Mammary epithelial cell (primary cell): ENCODE measurements at regions of chr1 and their contacts with region 1.

Region 1: DNA sequence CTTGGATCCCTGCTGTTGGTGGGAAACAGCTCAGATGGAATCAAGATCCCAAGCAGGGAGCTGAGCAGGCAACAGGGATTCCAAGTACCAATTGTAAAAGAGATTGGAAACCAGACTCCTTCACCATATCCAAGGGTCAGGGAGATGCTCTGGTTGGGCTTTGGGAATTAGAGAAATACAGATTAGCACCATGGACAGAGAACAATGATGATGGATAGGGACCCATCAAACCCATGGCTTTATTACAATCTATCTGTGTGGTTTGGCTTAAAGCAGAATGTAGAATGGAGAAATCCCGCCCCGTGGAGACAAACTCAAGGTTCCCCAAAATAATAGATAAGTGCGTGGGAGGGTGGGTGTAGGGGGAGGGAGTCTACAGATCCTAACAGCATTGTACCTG is 120.7 kb upstream of the CSF3R start:
- DNase-seq: no peak
- H3K4me3 ChIP-seq: no peak overlapping the region
- H3K27ac ChIP-seq: no peak overlapping the region
- H3K4me1 ChIP-seq: no peaks in the 10 kb centered on the region
- H3K27me3 ChIP-seq: no peaks in the 10 kb centered on the region
- CTCF ChIP-seq: no peak

Region 2: DNA sequence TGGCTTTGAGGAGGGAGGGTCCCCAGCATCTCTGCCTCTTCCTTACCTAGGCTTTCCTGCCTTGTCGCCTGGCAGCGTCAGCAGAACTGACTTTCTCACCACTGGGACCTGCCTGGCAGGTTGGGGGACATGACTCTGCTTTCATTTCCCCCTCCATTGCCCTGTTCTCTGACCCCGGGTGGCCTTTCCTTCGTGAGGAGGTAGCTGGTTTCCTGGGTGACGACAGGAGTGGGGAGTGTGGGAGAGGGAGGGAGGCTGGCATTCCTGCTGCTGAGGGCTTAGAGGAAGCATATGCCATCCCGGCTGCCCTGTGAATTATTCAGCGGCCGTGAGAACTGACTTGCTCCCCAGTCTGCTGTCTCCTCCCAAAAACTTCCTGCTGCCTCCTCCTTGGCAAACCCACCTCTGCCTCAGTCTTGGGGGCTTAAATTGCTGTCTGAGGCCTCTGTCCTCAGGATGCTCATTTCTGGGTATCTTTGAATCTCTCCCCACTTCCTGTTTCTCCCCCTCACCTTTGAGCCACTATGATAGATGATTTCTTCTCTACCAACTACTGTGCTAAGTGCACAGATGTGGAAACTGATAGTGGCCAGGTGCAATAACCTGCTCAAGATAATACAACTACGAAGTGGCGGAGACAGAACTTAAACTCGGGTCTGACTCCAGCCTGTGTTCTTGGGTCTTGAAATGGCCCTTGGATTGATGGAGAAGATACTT is 61.3 kb after region 1 on chr1:
- CTCF ChIA-PET with region 1: no interaction called
- dilution Hi-C with region 1: loop called (anchors 5 kb)
- in situ Hi-C with region 1: no loop called
- intact Hi-C with region 1: no loop called
- DNase-seq: no peak
- H3K4me3 ChIP-seq: no peak overlapping the region
- H3K27ac ChIP-seq: no peak overlapping the region
- H3K4me1 ChIP-seq: no peaks in the 10 kb centered on the region
- H3K27me3 ChIP-seq: peaks cover 5% of the 10 kb centered on the region
- CTCF ChIP-seq: no peak